Activated CD4-positive, alpha-beta memory T cell treated with anti-CD3 and anti-CD28 coated beads for 36 hours (primary cell): ENCODE measurements at regions of chr6 and their contacts with region 1.

Region 1: GRCh38 chr6:42726485-42727086 is 4.2 kb upstream of the PRPH2 start:
- DNase-seq: peak; percentile 80
- H3K4me3 Mint-ChIP-seq: peak overlapping the region; percentile 77
- H3K27ac Mint-ChIP-seq: peak overlapping the region; percentile 93
- H3K4me1 Mint-ChIP-seq: peaks cover 20% of the 10 kb centered on the region
- H3K27me3 Mint-ChIP-seq: no peaks in the 10 kb centered on the region

Region 2: DNA sequence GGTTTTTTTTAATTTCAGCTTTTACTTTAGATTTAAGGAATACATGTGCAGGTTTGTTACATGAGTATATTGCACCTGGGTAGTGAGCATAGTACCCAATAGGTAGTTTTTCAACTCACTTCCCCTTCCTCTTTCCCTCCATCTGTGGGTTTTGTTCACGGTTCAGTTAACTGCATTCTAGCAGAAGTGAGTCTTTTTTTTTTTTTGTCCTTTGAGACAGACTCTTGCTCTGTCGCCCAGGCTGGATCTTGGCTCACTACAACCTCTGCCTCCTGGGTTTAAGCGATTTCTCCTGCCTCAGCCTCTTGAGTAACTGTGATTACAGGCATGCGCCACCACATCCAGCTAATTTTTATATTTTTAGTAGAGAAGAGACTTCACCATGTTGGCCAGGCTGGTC is 154.1 kb before region 1 on chr6:
- CTCF ChIA-PET with region 1: no interaction called
- POLR2A ChIA-PET with region 1: no interaction called
- intact Hi-C with region 1: loop called (anchors 5 kb)
- DNase-seq: no peak
- H3K4me3 Mint-ChIP-seq: no peak overlapping the region
- H3K27ac Mint-ChIP-seq: no peak overlapping the region
- H3K4me1 Mint-ChIP-seq: peaks cover 50% of the 10 kb centered on the region
- H3K27me3 Mint-ChIP-seq: no peaks in the 10 kb centered on the region

Region 3: GRCh38 chr6:42692137-42692911 is 34.3 kb before region 1 on chr6:
- CTCF ChIA-PET with region 1: interaction called, 16 read pairs
- POLR2A ChIA-PET with region 1: interaction called, 4 read pairs
- intact Hi-C with region 1: loop called (anchors 5 kb)
- DNase-seq: peak; percentile 28
- H3K4me3 Mint-ChIP-seq: no peak overlapping the region
- H3K27ac Mint-ChIP-seq: peak overlapping the region; percentile 25
- H3K4me1 Mint-ChIP-seq: peaks cover 21% of the 10 kb centered on the region
- H3K27me3 Mint-ChIP-seq: no peaks in the 10 kb centered on the region

Region 4: GRCh38 chr6:42782622-42783176 is 56.1 kb after region 1 on chr6:
- CTCF ChIA-PET with region 1: interaction called, 4 read pairs
- POLR2A ChIA-PET with region 1: interaction called, 4 read pairs
- intact Hi-C with region 1: loop called (anchors 5 kb)
- DNase-seq: peak; percentile 80
- H3K4me3 Mint-ChIP-seq: peak overlapping the region; percentile 81
- H3K27ac Mint-ChIP-seq: peak overlapping the region; percentile 95
- H3K4me1 Mint-ChIP-seq: peaks cover 26% of the 10 kb centered on the region
- H3K27me3 Mint-ChIP-seq: no peaks in the 10 kb centered on the region

Region 5: GRCh38 chr6:42901536-42901957 is 175.0 kb after region 1 on chr6:
- CTCF ChIA-PET with region 1: interaction called, 4 read pairs
- POLR2A ChIA-PET with region 1: no interaction called
- intact Hi-C with region 1: loop called (anchors 5 kb)
- DNase-seq: peak; percentile 78
- H3K4me3 Mint-ChIP-seq: no peak overlapping the region
- H3K27ac Mint-ChIP-seq: no peak overlapping the region
- H3K4me1 Mint-ChIP-seq: peaks cover 8% of the 10 kb centered on the region
- H3K27me3 Mint-ChIP-seq: no peaks in the 10 kb centered on the region

Region 6: DNA sequence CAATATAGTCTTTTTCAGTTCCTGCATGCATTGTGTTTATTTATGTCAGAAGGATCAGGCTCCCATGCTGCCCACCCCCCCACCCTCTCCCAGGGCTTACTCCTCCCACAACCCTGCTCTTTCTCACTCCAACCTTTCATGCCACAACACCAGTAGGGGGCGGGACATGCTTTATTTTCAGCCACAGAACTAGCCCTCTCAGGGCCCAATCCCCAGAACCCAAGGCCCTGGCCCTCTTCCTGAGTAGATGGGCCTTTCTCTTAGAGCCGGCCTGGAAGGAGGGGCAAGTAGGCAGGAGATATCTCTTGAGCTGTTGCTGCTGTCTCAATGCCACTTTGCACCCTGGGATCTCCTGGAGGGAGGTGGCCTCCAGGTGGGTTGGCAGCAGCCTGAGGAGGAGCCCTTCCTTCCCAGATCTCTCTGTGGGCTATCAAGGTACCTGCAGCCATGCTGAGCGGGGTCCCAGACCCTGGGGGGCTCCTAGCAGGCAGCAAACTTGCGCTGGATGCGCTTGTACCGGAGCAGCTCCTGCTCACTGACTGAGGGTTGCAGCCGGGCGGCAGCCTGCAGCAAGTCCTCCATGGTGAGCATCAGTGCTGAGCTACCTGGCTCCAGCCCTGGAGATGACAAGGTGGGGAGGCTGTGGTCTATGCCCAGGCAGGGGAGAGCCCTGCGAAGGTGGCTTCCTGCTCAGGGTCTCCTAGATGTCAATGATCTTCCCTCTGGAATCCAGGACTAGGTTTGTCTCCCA is 237.4 kb after region 1 on chr6:
- CTCF ChIA-PET with region 1: no interaction called
- POLR2A ChIA-PET with region 1: no interaction called
- intact Hi-C with region 1: no loop called
- DNase-seq: peak; percentile 63
- H3K4me3 Mint-ChIP-seq: no peak overlapping the region
- H3K27ac Mint-ChIP-seq: no peak overlapping the region
- H3K4me1 Mint-ChIP-seq: peaks cover 13% of the 10 kb centered on the region
- H3K27me3 Mint-ChIP-seq: no peaks in the 10 kb centered on the region